ENCODE measurements at regions of chr10 and their contacts with region 1.

Region 1: DNA sequence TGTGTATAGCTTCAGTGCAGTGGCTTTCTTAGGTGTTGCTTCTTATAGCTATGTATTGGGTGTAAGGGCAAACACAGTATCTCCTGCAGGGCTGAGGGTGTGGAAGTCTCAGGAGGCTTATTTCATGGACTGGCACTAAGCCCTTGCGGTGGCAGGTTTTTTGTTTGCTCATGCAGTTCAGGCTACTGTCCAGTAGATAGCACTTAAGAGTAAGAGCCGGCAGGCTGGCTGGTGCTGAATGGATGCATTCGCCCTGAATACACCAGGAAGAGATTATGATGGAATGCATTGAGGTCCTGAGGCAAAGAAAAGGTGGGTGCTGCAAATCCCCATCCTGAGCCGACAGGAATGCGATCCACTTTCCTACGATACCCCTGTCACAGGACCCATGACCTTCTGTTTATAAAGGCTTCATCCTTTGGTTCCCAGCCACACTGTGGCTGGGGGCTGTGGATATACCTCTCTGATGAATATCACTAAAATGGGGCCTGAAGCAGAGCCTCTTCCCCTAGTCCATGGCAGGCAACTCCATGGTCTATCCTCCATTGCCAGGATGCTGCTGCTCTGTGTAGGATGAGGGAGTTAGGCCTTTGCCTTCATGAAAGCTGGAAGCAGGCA is 44.9 kb downstream of the ANXA8 start:
- DNase-seq: peak; percentile 28 to 64 (median 59)
- H3K4me3 ChIP-seq: no peak overlapping the region
- H3K27ac ChIP-seq: no peak overlapping the region
- H3K4me1 ChIP-seq: no peaks in the 10 kb centered on the region
- H3K27me3 ChIP-seq: no peaks in the 10 kb centered on the region

Region 2: DNA sequence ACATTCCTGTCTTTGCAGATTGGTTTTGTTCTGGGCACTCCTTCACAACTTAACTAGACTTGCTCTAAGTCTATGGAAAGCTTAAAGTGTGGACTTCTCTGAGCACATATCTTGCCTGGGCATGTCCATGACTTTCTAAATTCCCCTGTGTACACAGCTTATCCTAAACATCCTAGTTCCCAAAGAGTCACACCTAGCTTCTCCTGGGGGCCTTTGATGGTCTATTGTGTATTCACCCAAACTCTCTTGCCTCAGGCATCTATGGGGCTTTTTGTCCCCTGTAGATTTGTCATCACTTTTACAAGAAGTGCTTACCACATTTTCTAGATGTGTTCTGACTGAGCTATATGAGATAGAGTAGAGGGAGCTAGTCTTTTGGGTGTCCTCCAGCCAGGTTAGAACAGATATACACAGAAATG is 42.6 kb before region 1 on chr10:
- CTCF ChIA-PET with region 1: no interaction called
- POLR2A ChIA-PET with region 1: no interaction called
- DNase-seq: no peak
- H3K4me3 ChIP-seq: no peak overlapping the region
- H3K27ac ChIP-seq: no peak overlapping the region
- H3K4me1 ChIP-seq: no peaks in the 10 kb centered on the region
- H3K27me3 ChIP-seq: peaks cover 0 to 2% (median 0%) of the 10 kb centered on the region in 5 experiments

Region 3: GRCh38 chr10:47412869-47413268 is 26.1 kb before region 1 on chr10:
- CTCF ChIA-PET with region 1: no interaction called
- POLR2A ChIA-PET with region 1: no interaction called
- DNase-seq: no peak
- H3K4me3 ChIP-seq: no peak overlapping the region
- H3K27ac ChIP-seq: no peak overlapping the region
- H3K4me1 ChIP-seq: no peaks in the 10 kb centered on the region
- H3K27me3 ChIP-seq: no peaks in the 10 kb centered on the region

Region 4: DNA sequence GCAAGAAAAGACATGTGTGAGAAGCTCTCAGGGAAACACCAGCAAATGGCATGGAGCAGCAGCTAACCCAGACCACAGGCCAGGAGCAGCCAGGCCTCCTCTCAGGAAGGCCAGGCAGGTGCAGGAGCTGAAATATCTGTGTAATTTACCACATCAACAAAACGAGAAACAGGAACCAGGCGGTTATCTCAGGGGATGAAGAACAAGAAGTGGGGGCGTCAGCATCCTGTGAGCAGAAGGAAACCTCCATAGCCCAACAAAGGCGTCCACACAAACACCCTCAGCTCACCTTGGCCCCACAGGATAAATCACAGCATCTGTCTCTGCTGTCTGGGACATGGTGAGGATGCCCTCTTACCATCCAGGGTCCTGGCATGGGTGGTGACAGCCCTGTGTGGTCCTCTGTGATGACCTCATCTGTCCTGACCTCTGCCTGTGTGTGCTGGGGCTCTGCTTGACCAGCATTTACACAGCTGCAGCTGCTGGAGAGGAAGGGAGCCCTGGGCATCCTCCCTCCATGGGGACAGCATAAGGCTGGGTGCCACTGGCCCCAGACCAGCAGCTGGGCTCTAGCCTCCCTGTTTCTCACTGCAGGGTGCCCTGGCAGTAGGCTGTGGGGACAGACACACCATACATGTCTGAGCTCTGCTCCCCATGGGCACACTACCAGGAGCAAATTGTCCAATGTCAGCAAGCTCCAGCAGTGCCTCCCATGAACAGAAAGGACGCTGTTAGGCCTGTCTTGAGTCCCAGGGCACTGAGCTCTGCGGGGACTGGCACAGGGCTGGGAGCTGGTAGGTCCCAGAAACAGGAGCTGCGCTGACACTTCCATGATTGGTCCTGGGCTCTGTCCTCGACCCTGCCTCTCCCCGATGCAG is 10.4 kb after region 1 on chr10:
- CTCF ChIA-PET with region 1: interaction called, 13 read pairs
- POLR2A ChIA-PET with region 1: no interaction called
- DNase-seq: peak; percentile 83 to 98 (median 95)
- H3K4me3 ChIP-seq: peak overlapping the region in 1 of 7 experiments; percentile 13
- H3K27ac ChIP-seq: no peak overlapping the region
- H3K4me1 ChIP-seq: peaks cover 0 to 53% (median 34%) of the 10 kb centered on the region in 4 experiments
- H3K27me3 ChIP-seq: no peaks in the 10 kb centered on the region